ENCODE measurements at regions of chr12 and their contacts with region 1.

Region 1: GRCh38 chr12:50038336-50038735 is 13.0 kb upstream of the RACGAP1 start:
- H3K4me3 ChIP-seq: no peak overlapping the region
- H3K27ac ChIP-seq: no peak overlapping the region
- H3K4me1 ChIP-seq: no peaks in the 10 kb centered on the region
- CTCF ChIP-seq: no peak

Region 2: DNA sequence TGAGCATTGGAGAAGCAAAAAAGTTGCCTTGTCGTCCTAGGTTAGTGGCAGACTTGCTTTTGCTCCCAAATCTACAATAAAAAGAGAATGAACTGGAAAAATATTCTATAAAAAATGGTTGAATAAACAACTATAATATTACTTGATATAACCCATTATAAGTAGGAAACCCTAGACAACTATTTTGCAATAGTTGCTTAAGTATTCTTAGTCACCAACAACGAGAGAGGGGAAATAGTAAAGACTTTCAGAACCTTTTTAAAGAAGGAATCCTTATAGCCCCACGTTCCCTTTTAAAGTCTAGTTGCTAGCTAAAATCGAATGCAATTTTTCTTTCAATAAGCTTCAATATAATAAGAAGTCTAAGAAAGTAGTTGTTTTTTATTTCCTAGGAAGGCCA is 48.1 kb before region 1 on chr12:
- CTCF ChIA-PET with region 1: interaction called, 13 read pairs
- POLR2A ChIA-PET with region 1: no interaction called
- H3K4me3 ChIP-seq: no peak overlapping the region
- H3K27ac ChIP-seq: no peak overlapping the region
- H3K4me1 ChIP-seq: no peaks in the 10 kb centered on the region
- CTCF ChIP-seq: no peak

Region 3: DNA sequence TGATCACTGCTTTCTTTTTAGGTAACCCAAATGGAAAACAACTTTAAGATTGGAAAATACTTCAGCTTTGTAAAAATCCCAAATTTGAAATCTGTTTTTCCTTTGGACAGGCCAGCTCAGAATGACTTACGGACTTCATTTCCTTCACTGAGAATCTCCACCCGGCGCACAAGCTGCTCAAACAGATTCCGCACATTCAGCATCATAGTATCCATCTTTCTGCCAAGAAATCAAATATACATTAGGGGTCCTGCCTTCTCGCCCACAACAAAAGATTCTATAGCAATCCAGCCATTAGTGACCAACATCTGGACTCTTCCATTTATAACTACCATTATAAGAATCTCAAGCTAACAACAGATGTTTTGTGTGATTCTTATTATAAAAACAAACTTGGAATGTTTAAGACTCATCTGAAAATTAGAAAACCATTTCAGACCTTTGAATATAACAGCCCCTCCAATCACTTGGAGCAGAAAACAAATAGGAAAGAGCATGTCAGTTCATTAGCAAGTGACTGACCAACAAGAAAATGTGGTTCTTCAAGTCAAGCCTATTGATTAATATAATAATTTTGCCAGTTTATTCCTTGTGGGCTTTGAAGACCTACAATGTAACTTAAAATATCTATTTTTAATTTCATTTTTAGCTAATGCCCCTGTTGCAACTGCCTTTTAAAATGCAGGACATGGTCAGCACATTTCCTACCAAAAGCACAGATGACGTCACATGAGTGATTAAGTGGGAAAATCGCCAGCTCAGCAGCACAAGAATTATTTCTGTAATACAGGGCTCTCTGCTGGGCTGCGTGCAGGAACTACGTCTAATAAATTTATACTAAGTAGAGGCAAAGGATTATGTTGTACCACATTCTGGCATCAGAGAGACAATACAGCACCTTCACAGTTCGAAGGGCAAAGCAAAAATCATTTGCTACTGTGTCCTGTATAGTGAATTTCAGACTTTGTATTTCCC is 21.5 kb before region 1 on chr12:
- CTCF ChIA-PET with region 1: interaction called, 55 read pairs
- POLR2A ChIA-PET with region 1: no interaction called
- H3K4me3 ChIP-seq: no peak overlapping the region
- H3K27ac ChIP-seq: peak overlapping the region; percentile 13; the same call in 1 of the 2 replicates
- H3K4me1 ChIP-seq: peaks cover 12% of the 10 kb centered on the region
- CTCF ChIP-seq: no peak

Region 4: GRCh38 chr12:50050410-50051098 is 12.2 kb after region 1 on chr12:
- CTCF ChIA-PET with region 1: interaction called, 67 read pairs
- POLR2A ChIA-PET with region 1: no interaction called
- H3K4me3 ChIP-seq: no peak overlapping the region
- H3K27ac ChIP-seq: no peak overlapping the region
- H3K4me1 ChIP-seq: no peaks in the 10 kb centered on the region
- CTCF ChIP-seq: no peak

Region 5: DNA sequence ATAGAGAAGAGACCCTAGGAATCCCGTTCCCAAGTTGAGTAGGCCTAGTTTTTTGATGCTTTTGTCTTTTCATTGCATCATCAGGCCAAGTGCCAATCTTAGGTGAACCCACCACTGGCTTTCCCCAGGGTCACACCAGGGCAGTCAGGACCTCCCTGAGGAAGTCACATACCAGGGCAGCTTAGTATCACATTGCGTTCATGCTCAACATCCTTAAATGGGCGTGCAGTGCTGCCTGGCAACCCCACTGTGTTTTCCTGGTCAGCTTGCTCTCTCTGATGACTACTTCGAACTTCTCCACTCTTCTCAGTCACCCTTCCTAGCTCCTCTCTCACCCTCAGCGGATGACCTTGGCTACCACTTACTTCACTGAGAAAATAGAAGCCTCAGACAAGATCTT is 28.1 kb after region 1 on chr12:
- CTCF ChIA-PET with region 1: interaction called, 145 read pairs
- POLR2A ChIA-PET with region 1: interaction called, 3 read pairs
- H3K4me3 ChIP-seq: no peak overlapping the region
- H3K27ac ChIP-seq: no peak overlapping the region
- H3K4me1 ChIP-seq: no peaks in the 10 kb centered on the region
- CTCF ChIP-seq: no peak